ENCODE measurements at regions of chr3 and their contacts with region 1.

Region 1: GRCh38 chr3:41198950-41199865 is at the start of gene CTNNB1:
- DNase-seq: peak; percentile 87 to 96 (median 90)
- ATAC-seq: peak; percentile 81
- H3K4me3 ChIP-seq: peak within 1 kb of the TSS; percentile 95 to 98
- H3K4me3 Mint-ChIP-seq: peak within 1 kb of the TSS; percentile 96
- H3K27ac ChIP-seq: peak within 1 kb of the TSS; percentile 88 to 95
- H3K27ac Mint-ChIP-seq: peak within 1 kb of the TSS; percentile 97
- H3K4me1 ChIP-seq: peaks cover 40% of the 10 kb centered on the region
- H3K4me1 Mint-ChIP-seq: peaks cover 37% of the 10 kb centered on the region
- H3K27me3 ChIP-seq: no peaks in the 10 kb centered on the region
- H3K27me3 Mint-ChIP-seq: no peaks in the 10 kb centered on the region
- CTCF ChIP-seq: no peak
- total RNA-seq, gene CTNNB1: 206 to 225 TPM

Region 2: DNA sequence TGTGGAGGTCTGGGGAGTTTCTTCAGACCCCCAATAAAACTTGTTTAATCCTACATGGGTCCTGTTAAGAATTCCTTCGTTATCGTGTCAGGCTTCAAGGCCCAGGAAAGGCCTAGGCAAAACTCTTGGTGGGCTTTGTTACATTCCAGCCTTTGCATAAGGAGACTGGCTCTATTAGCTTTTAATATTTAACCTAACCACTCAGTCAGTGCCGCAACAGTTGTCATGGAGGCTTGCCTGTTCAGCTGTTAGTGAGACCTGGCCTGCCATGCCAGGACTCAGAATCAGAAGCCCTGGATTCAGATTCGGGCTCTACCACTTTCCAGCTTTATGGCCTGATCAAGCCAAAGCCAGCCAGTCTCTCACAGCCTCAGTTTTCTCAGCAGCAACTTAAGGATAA is 870.1 kb before region 1 on chr3:
- CTCF ChIA-PET with region 1: no interaction called
- POLR2A ChIA-PET with region 1: no interaction called
- intact Hi-C with region 1: loop called in 1 of 2 experiments (anchors 5 kb)
- DNase-seq: no peak
- ATAC-seq: no peak
- H3K4me3 ChIP-seq: no peak overlapping the region
- H3K4me3 Mint-ChIP-seq: no peak overlapping the region
- H3K27ac ChIP-seq: no peak overlapping the region
- H3K27ac Mint-ChIP-seq: no peak overlapping the region
- H3K4me1 ChIP-seq: no peaks in the 10 kb centered on the region
- H3K4me1 Mint-ChIP-seq: peaks cover 3% of the 10 kb centered on the region
- H3K27me3 ChIP-seq: no peaks in the 10 kb centered on the region
- H3K27me3 Mint-ChIP-seq: peaks cover 3% of the 10 kb centered on the region
- CTCF ChIP-seq: no peak

Region 3: DNA sequence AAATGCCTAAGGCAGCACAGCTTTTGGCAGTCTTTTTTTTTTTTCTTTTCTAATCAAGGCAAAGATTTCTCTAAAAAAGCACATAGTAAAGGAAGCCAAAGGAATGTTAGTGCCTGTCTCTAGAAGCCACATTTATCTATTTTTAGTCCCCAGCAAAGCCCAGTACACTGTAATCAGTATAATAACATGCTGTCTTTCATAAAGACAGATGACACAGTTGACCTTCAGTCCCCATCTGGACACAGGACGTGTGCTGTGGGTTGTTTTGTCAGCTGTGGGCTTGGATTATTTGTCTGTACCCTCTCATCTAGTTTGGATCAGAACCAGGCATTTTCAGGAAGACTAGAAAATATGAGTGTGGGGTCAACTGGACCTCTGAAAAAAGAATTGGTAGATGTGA is 110.3 kb before region 1 on chr3:
- CTCF ChIA-PET with region 1: no interaction called
- POLR2A ChIA-PET with region 1: no interaction called
- intact Hi-C with region 1: no loop called
- DNase-seq: no peak
- ATAC-seq: no peak
- H3K4me3 ChIP-seq: no peak overlapping the region
- H3K4me3 Mint-ChIP-seq: no peak overlapping the region
- H3K27ac ChIP-seq: no peak overlapping the region
- H3K27ac Mint-ChIP-seq: no peak overlapping the region
- H3K4me1 ChIP-seq: no peaks in the 10 kb centered on the region
- H3K4me1 Mint-ChIP-seq: no peaks in the 10 kb centered on the region
- H3K27me3 ChIP-seq: no peaks in the 10 kb centered on the region
- H3K27me3 Mint-ChIP-seq: peaks cover 2% of the 10 kb centered on the region
- CTCF ChIP-seq: no peak

Region 4: GRCh38 chr3:41117398-41117870 is 81.8 kb before region 1 on chr3:
- CTCF ChIA-PET with region 1: interaction called, 6 read pairs
- POLR2A ChIA-PET with region 1: interaction called, 20 read pairs
- intact Hi-C with region 1: loop called (anchors 1 to 2 kb)
- DNase-seq: peak; percentile 65 to 94 (median 83)
- ATAC-seq: peak; percentile 84
- H3K4me3 ChIP-seq: peak overlapping the region; percentile 18 to 27
- H3K4me3 Mint-ChIP-seq: peak overlapping the region; percentile 54
- H3K27ac ChIP-seq: peak overlapping the region; percentile 45 to 80
- H3K27ac Mint-ChIP-seq: peak overlapping the region; percentile 96
- H3K4me1 ChIP-seq: peaks cover 25% of the 10 kb centered on the region
- H3K4me1 Mint-ChIP-seq: peaks cover 33% of the 10 kb centered on the region
- H3K27me3 ChIP-seq: no peaks in the 10 kb centered on the region
- H3K27me3 Mint-ChIP-seq: no peaks in the 10 kb centered on the region
- CTCF ChIP-seq: no peak

Region 5: DNA sequence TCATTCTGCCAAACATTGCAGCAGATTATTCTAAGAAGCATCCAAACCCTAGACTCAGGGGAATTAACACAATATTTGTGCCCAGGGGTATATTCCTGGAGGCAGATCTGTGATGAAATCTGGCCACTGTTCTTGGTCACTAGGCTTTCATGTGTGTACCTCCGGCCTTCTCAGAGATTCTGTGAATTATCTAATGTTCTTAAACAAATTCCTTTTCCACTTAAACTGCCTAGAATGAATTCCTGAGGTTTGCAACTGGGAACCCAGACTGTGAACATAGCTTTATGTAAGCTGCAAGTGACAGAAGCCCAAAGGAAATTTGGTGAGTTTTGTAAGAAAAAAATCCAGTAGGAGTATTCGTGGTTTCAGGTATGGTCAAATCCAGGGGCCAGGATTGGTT is 20.6 kb before region 1 on chr3:
- CTCF ChIA-PET with region 1: no interaction called
- POLR2A ChIA-PET with region 1: no interaction called
- intact Hi-C with region 1: no loop called
- DNase-seq: no peak
- ATAC-seq: no peak
- H3K4me3 ChIP-seq: no peak overlapping the region
- H3K4me3 Mint-ChIP-seq: no peak overlapping the region
- H3K27ac ChIP-seq: no peak overlapping the region
- H3K27ac Mint-ChIP-seq: no peak overlapping the region
- H3K4me1 ChIP-seq: no peaks in the 10 kb centered on the region
- H3K4me1 Mint-ChIP-seq: no peaks in the 10 kb centered on the region
- H3K27me3 ChIP-seq: no peaks in the 10 kb centered on the region
- H3K27me3 Mint-ChIP-seq: peaks cover 26% of the 10 kb centered on the region
- CTCF ChIP-seq: no peak

Region 6: DNA sequence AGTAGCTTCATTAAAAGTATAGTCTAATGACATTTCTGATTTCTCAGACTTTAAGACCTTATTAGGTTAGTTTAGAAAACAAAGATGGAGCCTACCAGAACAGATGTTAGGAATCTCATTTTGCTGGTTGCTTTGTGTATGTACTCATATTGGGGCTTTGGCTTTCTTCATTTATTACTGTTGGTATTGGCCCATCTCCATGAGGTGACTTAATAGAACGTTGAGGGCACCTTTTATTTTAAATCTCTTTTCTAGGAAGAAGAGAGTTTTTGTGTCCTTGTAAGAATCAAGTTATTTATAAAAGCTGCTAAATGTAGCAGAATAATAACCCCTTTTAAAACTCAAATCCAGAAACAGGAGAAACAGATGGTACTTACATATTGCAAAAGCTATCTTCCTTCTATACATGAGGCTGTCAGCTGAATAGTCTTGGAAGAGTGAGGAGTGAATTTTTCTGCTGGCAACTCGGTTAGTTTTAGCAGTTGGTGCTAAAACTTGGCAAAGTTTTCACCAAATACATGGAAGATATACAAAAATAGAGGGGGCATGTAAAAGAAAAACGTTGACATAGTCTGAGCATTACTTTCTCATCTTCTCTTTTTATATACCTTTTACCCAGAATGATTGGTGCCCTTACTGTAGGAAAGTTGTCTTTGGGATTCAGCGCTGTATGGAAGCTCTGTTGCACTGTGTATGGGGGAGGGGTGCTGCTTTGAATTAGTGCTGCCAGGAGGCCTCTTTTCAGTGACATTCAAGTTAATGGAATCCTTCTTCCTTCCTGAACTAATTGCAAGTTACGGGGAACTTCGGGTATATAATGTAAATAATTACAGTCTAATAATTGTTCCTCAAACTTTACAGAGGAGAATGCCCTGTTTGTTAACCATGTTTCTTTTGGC is 35.9 kb after region 1 on chr3:
- CTCF ChIA-PET with region 1: no interaction called
- POLR2A ChIA-PET with region 1: interaction called, 6 read pairs
- intact Hi-C with region 1: loop called (anchors 5 kb)
- DNase-seq: no peak
- ATAC-seq: no peak
- H3K4me3 ChIP-seq: no peak overlapping the region
- H3K4me3 Mint-ChIP-seq: no peak overlapping the region
- H3K27ac ChIP-seq: no peak overlapping the region
- H3K27ac Mint-ChIP-seq: no peak overlapping the region
- H3K4me1 ChIP-seq: no peaks in the 10 kb centered on the region
- H3K4me1 Mint-ChIP-seq: peaks cover 5% of the 10 kb centered on the region
- H3K27me3 ChIP-seq: no peaks in the 10 kb centered on the region
- H3K27me3 Mint-ChIP-seq: no peaks in the 10 kb centered on the region
- CTCF ChIP-seq: no peak

Region 7: GRCh38 chr3:41961750-41962679 is 762.8 kb after region 1 on chr3 and contains the start of gene ULK4:
- CTCF ChIA-PET with region 1: no interaction called
- POLR2A ChIA-PET with region 1: interaction called, 5 read pairs
- intact Hi-C with region 1: loop called (anchors 1 to 5 kb)
- DNase-seq: peak; percentile 89 to 99 (median 95)
- ATAC-seq: peak; percentile 84
- H3K4me3 ChIP-seq: peak within 1 kb of the TSS; percentile 84 to 99
- H3K4me3 Mint-ChIP-seq: peak within 1 kb of the TSS; percentile 100
- H3K27ac ChIP-seq: peak within 1 kb of the TSS; percentile 85 to 96
- H3K27ac Mint-ChIP-seq: peak within 1 kb of the TSS; percentile 99
- H3K4me1 ChIP-seq: peaks cover 15% of the 10 kb centered on the region
- H3K4me1 Mint-ChIP-seq: peaks cover 24% of the 10 kb centered on the region
- H3K27me3 ChIP-seq: no peaks in the 10 kb centered on the region
- H3K27me3 Mint-ChIP-seq: no peaks in the 10 kb centered on the region
- CTCF ChIP-seq: no peak
- total RNA-seq, gene ULK4: 11.9 to 15.1 TPM

Measured in CD8-positive, alpha-beta T cell (primary cell).